CD4-positive, alpha-beta memory T cell (primary cell): ENCODE measurements at regions of chr14 and their contacts with region 1.

Region 1: DNA sequence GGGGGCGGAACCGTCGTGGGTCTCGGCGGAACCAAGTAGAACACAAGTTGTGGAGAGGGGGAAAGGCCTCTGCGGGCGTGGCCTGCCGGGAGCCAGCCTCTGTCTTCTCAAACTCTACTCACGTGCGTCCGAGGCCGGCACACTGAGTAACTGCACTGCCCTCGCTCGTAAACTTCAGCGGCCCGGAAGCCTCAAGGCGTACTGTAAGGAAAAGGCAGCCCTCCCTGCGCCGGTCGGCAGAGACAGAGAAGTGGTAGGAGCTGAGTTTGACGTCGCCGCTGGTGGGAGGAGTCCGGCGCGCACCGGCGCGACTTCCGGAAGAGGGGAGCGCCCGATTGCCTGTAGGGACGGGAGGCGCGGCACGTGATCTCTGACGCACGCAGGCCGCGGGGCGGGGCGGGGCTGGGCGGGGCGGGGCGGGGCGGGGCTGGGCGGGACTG is at the start of gene FBXO33:
- DNase-seq: peak; percentile 97 to 99 (median 98)
- H3K4me3 ChIP-seq: peak within 1 kb of the TSS; percentile 88 to 97
- H3K4me3 Mint-ChIP-seq: peak within 1 kb of the TSS; percentile 99 to 100 (median 100)
- H3K27ac ChIP-seq: peak within 1 kb of the TSS; percentile 91
- H3K27ac Mint-ChIP-seq: peak within 1 kb of the TSS; percentile 100
- H3K4me1 ChIP-seq: peaks cover 47% of the 10 kb centered on the region
- H3K4me1 Mint-ChIP-seq: peaks cover 32 to 56% (median 38%) of the 10 kb centered on the region in 4 donors
- H3K27me3 ChIP-seq: no peaks in the 10 kb centered on the region
- H3K27me3 Mint-ChIP-seq: peaks cover 0 to 2% of the 10 kb centered on the region in 2 donors
- total RNA-seq, gene FBXO33: 18.0 to 21.5 TPM

Region 2: GRCh38 chr14:39102969-39103957 is 328.9 kb before region 1 on chr14 and contains the start of gene SEC23A:
- CTCF ChIA-PET with region 1: interaction called, 10 read pairs
- POLR2A ChIA-PET with region 1: interaction called, 38 read pairs
- intact Hi-C with region 1: loop called (anchors 2 kb)
- DNase-seq: peak; percentile 80 to 88 (median 82)
- H3K4me3 ChIP-seq: peak within 1 kb of the TSS; percentile 77 to 89
- H3K4me3 Mint-ChIP-seq: peak within 1 kb of the TSS; percentile 93 to 98 (median 96)
- H3K27ac ChIP-seq: peak within 1 kb of the TSS; percentile 86
- H3K27ac Mint-ChIP-seq: peak within 1 kb of the TSS; percentile 91 to 99 (median 98)
- H3K4me1 ChIP-seq: peaks cover 50% of the 10 kb centered on the region
- H3K4me1 Mint-ChIP-seq: peaks cover 21 to 64% (median 40%) of the 10 kb centered on the region in 4 donors
- H3K27me3 ChIP-seq: no peaks in the 10 kb centered on the region
- H3K27me3 Mint-ChIP-seq: no peaks in the 10 kb centered on the region
- total RNA-seq, gene SEC23A: 61.1 to 70.3 TPM

Region 3: DNA sequence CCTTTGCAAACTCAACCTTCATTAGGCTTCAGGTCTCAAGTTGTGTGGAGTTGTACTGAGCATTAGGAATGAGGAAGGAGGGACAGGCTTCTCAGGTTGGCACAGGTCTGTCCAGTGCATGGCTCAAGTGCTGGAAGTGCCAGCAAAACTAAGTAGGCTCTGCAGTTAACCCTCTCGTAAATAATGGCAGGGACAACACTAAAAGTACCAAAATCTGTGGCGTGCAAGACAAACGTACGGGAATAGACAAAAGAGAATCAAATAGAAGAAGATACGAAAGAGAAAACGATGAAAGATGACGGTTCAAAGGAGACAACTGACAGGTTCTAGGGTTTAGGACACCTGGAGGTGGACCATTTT is 262.7 kb before region 1 on chr14:
- CTCF ChIA-PET with region 1: interaction called, 4 read pairs
- POLR2A ChIA-PET with region 1: interaction called, 61 read pairs
- intact Hi-C with region 1: loop called (anchors 1 kb)
- DNase-seq: no peak
- H3K4me3 ChIP-seq: peak overlapping the region; percentile 86 to 99
- H3K4me3 Mint-ChIP-seq: peak overlapping the region; percentile 88 to 100 (median 96)
- H3K27ac ChIP-seq: peak overlapping the region; percentile 94
- H3K27ac Mint-ChIP-seq: peak overlapping the region; percentile 93 to 100 (median 99)
- H3K4me1 ChIP-seq: peaks cover 40% of the 10 kb centered on the region
- H3K4me1 Mint-ChIP-seq: peaks cover 35 to 59% (median 48%) of the 10 kb centered on the region in 4 donors
- H3K27me3 ChIP-seq: no peaks in the 10 kb centered on the region
- H3K27me3 Mint-ChIP-seq: no peaks in the 10 kb centered on the region

Region 4: GRCh38 chr14:39232554-39233415 is 199.4 kb before region 1 on chr14:
- CTCF ChIA-PET with region 1: interaction called, 9 read pairs
- POLR2A ChIA-PET with region 1: interaction called, 16 read pairs
- intact Hi-C with region 1: loop called (anchors 2 kb)
- DNase-seq: peak in 2 of 5 donors; percentile 4 to 10
- H3K4me3 ChIP-seq: no peak overlapping the region
- H3K4me3 Mint-ChIP-seq: peak overlapping the region in 3 of 8 donors; percentile 40 to 60 (median 43)
- H3K27ac ChIP-seq: no peak overlapping the region
- H3K27ac Mint-ChIP-seq: peak overlapping the region in 5 of 7 donors; percentile 28 to 75 (median 63)
- H3K4me1 ChIP-seq: peaks cover 35% of the 10 kb centered on the region
- H3K4me1 Mint-ChIP-seq: peaks cover 24 to 37% (median 31%) of the 10 kb centered on the region in 4 donors
- H3K27me3 ChIP-seq: no peaks in the 10 kb centered on the region
- H3K27me3 Mint-ChIP-seq: no peaks in the 10 kb centered on the region

Region 5: DNA sequence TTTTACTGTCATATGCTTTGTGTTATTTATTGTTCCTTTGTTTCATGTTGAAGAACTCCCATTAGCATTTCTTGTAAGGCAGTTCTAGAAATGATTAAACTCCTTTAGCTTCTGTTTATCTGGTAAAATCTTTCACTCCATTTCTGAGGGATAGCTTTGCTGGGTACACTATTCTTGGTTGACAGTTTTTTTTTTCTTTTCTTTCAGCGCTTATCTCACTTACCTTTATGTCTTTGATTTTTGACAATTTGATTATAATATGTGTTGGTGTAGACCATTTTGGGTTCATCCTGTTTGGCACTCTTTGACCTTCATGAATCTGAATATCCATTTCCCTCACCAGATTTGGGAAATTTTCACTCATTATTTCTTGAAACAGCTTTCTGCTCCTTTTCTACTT is 16.1 kb before region 1 on chr14:
- CTCF ChIA-PET with region 1: interaction called, 7 read pairs
- POLR2A ChIA-PET with region 1: interaction called, 17 read pairs
- intact Hi-C with region 1: loop called (anchors 1 kb)
- DNase-seq: no peak
- H3K4me3 ChIP-seq: no peak overlapping the region
- H3K4me3 Mint-ChIP-seq: peak overlapping the region in 2 of 8 donors; percentile 32 to 58
- H3K27ac ChIP-seq: no peak overlapping the region
- H3K27ac Mint-ChIP-seq: peak overlapping the region in 1 of 7 donors; percentile 46
- H3K4me1 ChIP-seq: peaks cover 5% of the 10 kb centered on the region
- H3K4me1 Mint-ChIP-seq: peaks cover 15 to 31% (median 27%) of the 10 kb centered on the region in 4 donors
- H3K27me3 ChIP-seq: no peaks in the 10 kb centered on the region
- H3K27me3 Mint-ChIP-seq: no peaks in the 10 kb centered on the region